ENCODE measurements at regions of chr12 and their contacts with region 1.

Region 1: DNA sequence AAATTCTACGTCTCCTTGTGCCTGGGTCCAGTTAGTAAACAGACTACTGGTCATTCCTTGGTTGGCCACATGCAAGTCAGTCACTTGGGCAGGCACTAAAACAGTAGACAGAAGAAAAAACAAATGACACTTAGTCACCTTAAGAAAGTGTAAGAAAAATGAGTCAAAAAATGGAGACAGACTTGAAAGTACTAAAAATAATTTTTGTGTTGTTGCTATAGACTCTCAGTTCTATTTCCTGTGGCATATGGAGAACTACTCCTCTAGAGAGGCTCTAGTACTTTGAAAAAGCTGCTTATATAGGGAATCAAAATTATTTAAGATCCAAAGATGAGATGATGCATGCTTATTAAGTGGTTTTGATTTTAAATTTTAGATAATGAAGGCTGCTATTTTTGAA is 56.0 kb downstream of the PTPRB start:
- DNase-seq: no peak
- ATAC-seq: no peak
- H3K4me3 ChIP-seq: no peak overlapping the region
- H3K27ac ChIP-seq: no peak overlapping the region
- H3K4me1 ChIP-seq: no peaks in the 10 kb centered on the region
- H3K27me3 ChIP-seq: no peaks in the 10 kb centered on the region
- CTCF ChIP-seq: no peak

Region 2: DNA sequence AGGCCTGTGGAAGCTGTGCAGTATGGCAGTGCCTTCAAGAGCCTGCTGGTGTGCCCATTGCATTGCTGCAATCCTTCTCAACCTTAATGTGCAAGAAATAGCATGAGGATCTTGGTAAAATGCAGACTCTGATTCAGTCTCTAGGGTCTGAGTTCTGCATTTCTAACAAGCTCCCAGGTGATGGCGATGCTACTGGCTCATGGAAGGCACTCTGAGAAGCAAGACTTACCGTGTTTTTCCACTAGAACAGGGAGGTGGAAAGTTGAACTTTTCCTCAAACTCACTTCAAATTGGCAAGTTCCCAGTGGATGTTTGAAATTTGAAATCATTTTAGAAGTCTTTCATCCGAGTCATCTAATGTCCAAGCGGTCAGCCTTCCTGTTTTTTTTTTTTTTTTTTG is 700.6 kb before region 1 on chr12:
- intact Hi-C with region 1: loop called (anchors 10 kb)
- DNase-seq: no peak
- ATAC-seq: no peak
- H3K4me3 ChIP-seq: no peak overlapping the region
- H3K27ac ChIP-seq: no peak overlapping the region
- H3K4me1 ChIP-seq: peaks cover 7% of the 10 kb centered on the region
- H3K27me3 ChIP-seq: no peaks in the 10 kb centered on the region
- CTCF ChIP-seq: no peak

Measured in upper lobe of right lung (tissue), 1 donor.